ENCODE measurements at regions of chr10 and their contacts with region 1.

Region 1: DNA sequence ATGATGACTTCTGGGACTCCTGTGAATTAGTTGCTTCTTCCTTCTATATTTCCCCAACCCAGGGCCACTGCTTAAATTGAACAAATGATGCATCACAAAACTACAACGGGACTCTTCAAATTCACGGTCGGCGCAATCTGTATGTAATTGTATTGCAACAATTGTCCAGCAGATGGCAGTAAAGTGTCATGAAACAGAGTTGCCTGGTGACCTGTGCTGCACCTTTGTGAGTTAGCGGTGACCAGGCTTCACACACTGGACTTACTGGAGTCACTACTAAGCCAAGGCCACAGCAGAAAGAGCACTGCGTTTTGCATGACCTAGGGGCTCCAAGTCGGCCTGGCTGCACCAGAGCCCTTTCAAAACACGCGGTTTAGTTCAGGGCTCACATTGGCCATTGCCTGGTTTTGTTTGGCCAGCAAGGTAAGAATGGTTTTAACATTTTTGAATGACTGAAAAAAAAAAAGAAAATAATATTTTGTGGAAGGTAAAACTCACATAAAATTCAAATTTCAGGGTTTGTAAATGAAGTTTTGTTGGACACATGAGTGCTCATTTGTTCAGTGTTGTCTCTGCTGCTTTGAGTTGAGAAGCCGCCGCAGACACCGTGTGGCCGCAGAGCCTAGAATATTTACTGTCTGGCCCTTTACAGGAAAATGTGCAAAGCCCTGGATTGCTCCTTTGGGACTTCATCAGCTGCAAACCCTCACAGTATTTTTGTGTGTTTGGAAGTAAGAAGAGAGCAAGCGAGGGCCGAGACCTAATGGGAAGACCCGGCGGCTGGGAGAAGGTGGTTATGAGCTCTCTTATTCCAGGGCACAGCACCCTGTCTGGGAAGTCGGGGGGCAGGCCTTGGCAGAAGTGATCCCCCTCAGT is 23.2 kb upstream of the ZNF32 start:
- DNase-seq: peak in 8 of 9 donors; percentile 18 to 71 (median 52)
- ATAC-seq: peak; percentile 75
- H3K4me3 ChIP-seq: no peak overlapping the region
- H3K4me3 Mint-ChIP-seq: no peak overlapping the region
- H3K27ac ChIP-seq: no peak overlapping the region
- H3K27ac Mint-ChIP-seq: no peak overlapping the region
- H3K4me1 ChIP-seq: no peaks in the 10 kb centered on the region
- H3K4me1 Mint-ChIP-seq: peaks cover 2 to 11% (median 6%) of the 10 kb centered on the region in 7 donors
- H3K27me3 ChIP-seq: no peaks in the 10 kb centered on the region
- H3K27me3 Mint-ChIP-seq: peaks cover 33 to 46% (median 38%) of the 10 kb centered on the region in 5 donors

Region 2: DNA sequence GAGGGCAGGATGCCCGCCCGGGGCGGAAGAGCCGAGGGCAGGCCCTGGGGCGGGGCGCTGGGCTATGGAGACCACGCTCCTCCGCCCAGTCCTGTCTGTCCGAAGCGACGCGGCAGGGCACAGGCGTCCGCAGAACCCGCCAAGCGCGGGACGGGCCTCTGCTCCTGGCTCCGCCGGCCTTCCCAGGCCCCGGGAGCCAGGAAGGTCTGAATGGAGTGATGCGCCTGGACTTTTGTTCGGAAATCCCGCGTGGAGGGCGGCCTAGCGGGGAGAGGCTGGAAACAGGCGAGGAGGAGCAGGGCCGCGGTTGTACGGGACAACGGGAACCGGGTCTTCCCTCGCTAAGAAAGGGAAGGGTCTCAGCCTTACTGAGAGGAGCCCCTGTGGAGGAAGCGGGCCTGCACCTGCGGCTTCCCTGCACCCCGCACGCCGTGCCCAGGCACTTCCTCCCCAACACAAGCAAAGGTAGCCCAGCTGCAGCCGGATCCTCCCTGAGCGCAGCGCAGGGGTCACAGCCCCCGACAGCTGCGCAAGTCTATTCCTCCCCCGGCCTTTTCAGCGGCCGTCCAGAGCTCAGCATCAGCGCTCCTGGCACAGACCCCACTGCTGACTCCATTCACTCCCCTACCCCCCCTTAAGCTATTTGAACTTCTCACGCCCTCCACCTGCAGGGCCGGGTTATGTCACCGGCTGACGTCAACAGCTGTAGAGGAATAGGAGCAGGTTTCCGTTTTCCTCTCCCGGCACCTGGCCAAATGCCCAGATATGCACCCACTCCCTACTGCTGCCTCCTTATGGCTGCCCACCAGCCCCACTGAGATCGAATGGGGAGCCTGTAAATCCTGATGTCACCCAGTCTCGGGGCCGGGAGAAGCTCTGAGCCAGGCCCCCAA is 738.2 kb before region 1 on chr10:
- CTCF ChIA-PET with region 1: no interaction called
- POLR2A ChIA-PET with region 1: no interaction called
- intact Hi-C with region 1: no loop called
- DNase-seq: peak in 8 of 9 donors; percentile 24 to 81 (median 66)
- ATAC-seq: peak; percentile 66
- H3K4me3 ChIP-seq: peak overlapping the region; percentile 60
- H3K4me3 Mint-ChIP-seq: peak overlapping the region in 9 of 10 donors; percentile 87 to 93 (median 91)
- H3K27ac ChIP-seq: peak overlapping the region; percentile 73
- H3K27ac Mint-ChIP-seq: peak overlapping the region in 7 of 9 donors; percentile 82 to 95 (median 90)
- H3K4me1 ChIP-seq: peaks cover 0 to 12% of the 10 kb centered on the region in 2 donors
- H3K4me1 Mint-ChIP-seq: peaks cover 9 to 25% (median 19%) of the 10 kb centered on the region in 7 donors
- H3K27me3 ChIP-seq: no peaks in the 10 kb centered on the region
- H3K27me3 Mint-ChIP-seq: peaks cover 5 to 38% (median 31%) of the 10 kb centered on the region in 5 donors

Region 3: GRCh38 chr10:43888586-43888985 is 216.7 kb after region 1 on chr10:
- CTCF ChIA-PET with region 1: no interaction called
- POLR2A ChIA-PET with region 1: no interaction called
- intact Hi-C with region 1: no loop called
- DNase-seq: no peak
- ATAC-seq: no peak
- H3K4me3 ChIP-seq: no peak overlapping the region
- H3K4me3 Mint-ChIP-seq: no peak overlapping the region
- H3K27ac ChIP-seq: no peak overlapping the region
- H3K27ac Mint-ChIP-seq: no peak overlapping the region
- H3K4me1 ChIP-seq: no peaks in the 10 kb centered on the region
- H3K4me1 Mint-ChIP-seq: no peaks in the 10 kb centered on the region
- H3K27me3 ChIP-seq: no peaks in the 10 kb centered on the region
- H3K27me3 Mint-ChIP-seq: peaks cover 0 to 34% (median 9%) of the 10 kb centered on the region in 5 donors

Region 4: GRCh38 chr10:44030143-44030542 is 358.2 kb after region 1 on chr10:
- CTCF ChIA-PET with region 1: interaction called, 3 read pairs
- POLR2A ChIA-PET with region 1: no interaction called
- intact Hi-C with region 1: loop called in 1 of 2 experiments (anchors 1 kb)
- DNase-seq: peak in 6 of 9 donors; percentile 9 to 42 (median 25)
- ATAC-seq: peak; percentile 59
- H3K4me3 ChIP-seq: no peak overlapping the region
- H3K4me3 Mint-ChIP-seq: no peak overlapping the region
- H3K27ac ChIP-seq: no peak overlapping the region
- H3K27ac Mint-ChIP-seq: no peak overlapping the region
- H3K4me1 ChIP-seq: no peaks in the 10 kb centered on the region
- H3K4me1 Mint-ChIP-seq: no peaks in the 10 kb centered on the region
- H3K27me3 ChIP-seq: no peaks in the 10 kb centered on the region
- H3K27me3 Mint-ChIP-seq: peaks cover 0 to 24% (median 16%) of the 10 kb centered on the region in 5 donors

Region 5: GRCh38 chr10:44386546-44387052 is 714.7 kb after region 1 on chr10:
- CTCF ChIA-PET with region 1: no interaction called
- POLR2A ChIA-PET with region 1: no interaction called
- intact Hi-C with region 1: loop called in 1 of 2 experiments (anchors 1 kb)
- DNase-seq: peak in 6 of 9 donors; percentile 10 to 48 (median 19)
- ATAC-seq: peak; percentile 61
- H3K4me3 ChIP-seq: no peak overlapping the region
- H3K4me3 Mint-ChIP-seq: no peak overlapping the region
- H3K27ac ChIP-seq: no peak overlapping the region
- H3K27ac Mint-ChIP-seq: no peak overlapping the region
- H3K4me1 ChIP-seq: no peaks in the 10 kb centered on the region
- H3K4me1 Mint-ChIP-seq: peaks cover 0 to 8% (median 4%) of the 10 kb centered on the region in 7 donors
- H3K27me3 ChIP-seq: peaks cover 0 to 3% of the 10 kb centered on the region in 2 donors
- H3K27me3 Mint-ChIP-seq: peaks cover 23 to 42% (median 39%) of the 10 kb centered on the region in 5 donors

Region 6: GRCh38 chr10:44864637-44865288 is 1192.9 kb after region 1 on chr10:
- CTCF ChIA-PET with region 1: interaction called, 5 read pairs
- POLR2A ChIA-PET with region 1: no interaction called
- intact Hi-C with region 1: loop called (anchors 1 to 2 kb)
- DNase-seq: peak; percentile 67 to 90 (median 82)
- ATAC-seq: peak; percentile 91
- H3K4me3 ChIP-seq: peak overlapping the region; percentile 93
- H3K4me3 Mint-ChIP-seq: peak overlapping the region; percentile 76 to 96 (median 92)
- H3K27ac ChIP-seq: no peak overlapping the region
- H3K27ac Mint-ChIP-seq: peak overlapping the region in 3 of 9 donors; percentile 45 to 79 (median 66)
- H3K4me1 ChIP-seq: peaks cover 4% of the 10 kb centered on the region in 2 donors
- H3K4me1 Mint-ChIP-seq: peaks cover 0 to 20% (median 12%) of the 10 kb centered on the region in 7 donors
- H3K27me3 ChIP-seq: peaks cover 0 to 3% of the 10 kb centered on the region in 2 donors
- H3K27me3 Mint-ChIP-seq: peaks cover 46 to 64% (median 62%) of the 10 kb centered on the region in 5 donors